Activated CD4-positive, alpha-beta memory T cell treated with anti-CD3 and anti-CD28 coated beads for 36 hours (primary cell): ENCODE measurements at regions of chr1 and their contacts with region 1.

Region 1: GRCh38 chr1:21594935-21595897 is 73.9 kb downstream of the RAP1GAP start:
- DNase-seq: peak; percentile 75
- H3K4me3 Mint-ChIP-seq: no peak overlapping the region
- H3K27ac Mint-ChIP-seq: no peak overlapping the region
- H3K4me1 Mint-ChIP-seq: no peaks in the 10 kb centered on the region
- H3K27me3 Mint-ChIP-seq: peaks cover 4% of the 10 kb centered on the region

Region 2: DNA sequence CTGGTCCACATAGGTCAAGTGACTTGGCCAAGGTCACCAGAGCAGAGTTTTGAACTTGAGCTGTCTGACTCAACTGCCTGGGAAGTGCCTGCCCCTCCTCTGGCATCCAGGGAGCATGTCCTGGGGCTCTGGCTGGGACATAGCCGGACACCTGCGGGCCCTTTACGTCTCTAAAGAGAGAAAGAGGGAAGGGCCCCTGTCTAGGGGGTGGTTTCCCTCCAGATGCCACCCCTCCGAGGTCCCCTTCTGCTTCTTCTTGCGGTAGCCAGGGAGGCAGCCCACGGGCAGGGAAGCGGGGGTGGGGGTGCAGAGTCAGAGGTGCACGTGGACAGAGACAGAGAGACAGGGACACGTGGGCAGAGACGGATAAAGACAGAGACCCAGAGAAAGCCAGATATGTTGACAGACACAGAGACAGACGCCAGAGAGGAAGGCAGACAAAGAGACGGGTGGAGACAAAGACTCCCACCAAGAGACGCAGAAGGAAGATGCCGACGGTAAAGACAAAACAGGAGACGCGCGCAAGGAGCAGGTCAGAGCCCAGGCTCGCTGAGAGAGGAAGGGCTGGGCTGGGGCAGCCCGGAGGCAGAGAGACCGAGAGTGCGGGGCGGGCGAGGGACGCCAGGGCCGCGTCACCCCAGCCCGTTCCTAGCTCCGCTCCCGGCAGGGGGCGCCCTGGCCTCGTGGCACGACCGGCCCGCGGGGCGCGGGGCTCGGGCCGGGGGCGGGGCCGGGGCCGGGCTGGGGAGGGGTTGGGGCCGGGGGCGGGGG is 86.5 kb before region 1 on chr1:
- CTCF ChIA-PET with region 1: interaction called, 3 read pairs
- POLR2A ChIA-PET with region 1: no interaction called
- intact Hi-C with region 1: loop called (anchors 10 kb)
- DNase-seq: peak; percentile 73
- H3K4me3 Mint-ChIP-seq: peak overlapping the region; percentile 20
- H3K27ac Mint-ChIP-seq: no peak overlapping the region
- H3K4me1 Mint-ChIP-seq: peaks cover 4% of the 10 kb centered on the region
- H3K27me3 Mint-ChIP-seq: peaks cover 51% of the 10 kb centered on the region